CD4-positive, alpha-beta T cell (primary cell): ENCODE measurements at regions of chr2 and their contacts with region 1.

Region 1: GRCh38 chr2:85302121-85302520 is 25.7 kb downstream of the TGOLN2 start:
- DNase-seq: no peak
- ATAC-seq: no peak
- H3K4me3 ChIP-seq: no peak overlapping the region
- H3K4me3 Mint-ChIP-seq: no peak overlapping the region
- H3K27ac ChIP-seq: no peak overlapping the region
- H3K27ac Mint-ChIP-seq: no peak overlapping the region
- H3K4me1 ChIP-seq: peaks cover 16% of the 10 kb centered on the region
- H3K4me1 Mint-ChIP-seq: peaks cover 13% of the 10 kb centered on the region
- H3K27me3 ChIP-seq: no peaks in the 10 kb centered on the region
- H3K27me3 Mint-ChIP-seq: peaks cover 4% of the 10 kb centered on the region
- CTCF ChIP-seq: no peak

Region 2: DNA sequence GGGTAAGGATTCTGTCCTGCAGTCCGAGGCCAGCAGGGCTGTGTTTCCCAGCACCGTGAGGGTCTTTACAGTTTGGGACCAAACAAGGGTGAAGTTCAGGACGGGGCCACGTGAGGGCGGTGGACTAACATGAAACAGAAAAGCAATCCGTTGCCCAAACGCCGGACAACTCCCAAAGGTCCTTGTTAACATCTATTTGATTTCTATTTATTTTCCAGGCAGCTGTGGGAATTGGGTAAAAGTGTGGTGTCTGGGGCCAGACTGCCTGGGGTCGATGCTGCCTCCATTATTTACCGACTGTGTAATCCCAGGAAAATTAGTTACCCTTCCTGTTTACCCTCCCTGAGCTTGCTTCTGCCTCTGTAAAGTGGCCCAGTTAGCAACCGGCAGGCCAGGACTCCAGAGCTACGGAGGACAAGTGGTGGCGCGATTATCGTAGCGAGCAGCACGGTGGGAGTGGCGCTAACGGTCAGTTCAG is 235.2 kb before region 1 on chr2:
- CTCF ChIA-PET with region 1: interaction called, 3 read pairs
- POLR2A ChIA-PET with region 1: no interaction called
- intact Hi-C with region 1: loop called (anchors 2 to 10 kb)
- DNase-seq: peak in 7 of 14 experiments; percentile 2 to 34 (median 22)
- ATAC-seq: no peak
- H3K4me3 ChIP-seq: no peak overlapping the region
- H3K4me3 Mint-ChIP-seq: no peak overlapping the region
- H3K27ac ChIP-seq: no peak overlapping the region
- H3K27ac Mint-ChIP-seq: no peak overlapping the region
- H3K4me1 ChIP-seq: peaks cover 5% of the 10 kb centered on the region
- H3K4me1 Mint-ChIP-seq: peaks cover 6% of the 10 kb centered on the region
- H3K27me3 ChIP-seq: peaks cover 3 to 12% of the 10 kb centered on the region in 2 experiments
- H3K27me3 Mint-ChIP-seq: peaks cover 25% of the 10 kb centered on the region
- CTCF ChIP-seq: no peak

Region 3: DNA sequence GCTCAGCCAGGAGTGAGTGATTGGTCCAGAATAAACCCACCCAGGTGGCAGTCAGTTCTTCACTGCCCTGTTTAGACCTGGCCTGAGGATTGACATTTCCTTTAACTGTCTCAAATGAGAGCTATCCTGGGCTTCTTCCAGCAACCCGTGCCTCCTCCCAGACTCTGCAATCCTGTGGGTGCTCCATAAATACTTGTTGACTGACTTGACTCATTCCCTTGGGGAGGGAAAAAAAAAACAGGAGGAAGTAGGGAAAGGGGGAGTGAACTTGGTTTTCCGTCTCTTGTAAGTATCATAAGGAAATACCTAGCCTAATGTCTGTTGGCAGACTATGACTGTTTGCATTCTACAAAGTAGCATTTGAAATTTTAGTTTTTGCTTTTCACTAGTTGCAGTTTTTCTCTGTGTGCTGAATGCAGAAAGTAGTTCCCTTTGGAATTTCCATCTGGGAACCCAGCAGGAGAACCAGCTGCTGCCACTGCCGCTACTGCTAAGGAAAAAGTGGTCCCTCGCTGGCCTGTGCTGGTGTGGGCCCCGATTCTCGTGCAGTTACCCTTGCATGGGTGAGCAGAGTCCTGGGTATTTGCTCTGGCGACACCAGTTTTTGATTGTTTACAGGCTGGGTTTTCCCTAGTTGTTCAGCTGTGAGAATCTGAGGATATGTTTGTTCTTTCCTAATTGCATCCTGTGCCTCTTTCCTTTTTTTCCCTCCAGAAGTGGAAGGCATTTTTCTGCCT is 53.2 kb before region 1 on chr2:
- CTCF ChIA-PET with region 1: no interaction called
- POLR2A ChIA-PET with region 1: no interaction called
- intact Hi-C with region 1: no loop called
- DNase-seq: no peak
- ATAC-seq: no peak
- H3K4me3 ChIP-seq: no peak overlapping the region
- H3K4me3 Mint-ChIP-seq: no peak overlapping the region
- H3K27ac ChIP-seq: no peak overlapping the region
- H3K27ac Mint-ChIP-seq: no peak overlapping the region
- H3K4me1 ChIP-seq: no peaks in the 10 kb centered on the region
- H3K4me1 Mint-ChIP-seq: no peaks in the 10 kb centered on the region
- H3K27me3 ChIP-seq: no peaks in the 10 kb centered on the region
- H3K27me3 Mint-ChIP-seq: peaks cover 8% of the 10 kb centered on the region
- CTCF ChIP-seq: no peak

Region 4: DNA sequence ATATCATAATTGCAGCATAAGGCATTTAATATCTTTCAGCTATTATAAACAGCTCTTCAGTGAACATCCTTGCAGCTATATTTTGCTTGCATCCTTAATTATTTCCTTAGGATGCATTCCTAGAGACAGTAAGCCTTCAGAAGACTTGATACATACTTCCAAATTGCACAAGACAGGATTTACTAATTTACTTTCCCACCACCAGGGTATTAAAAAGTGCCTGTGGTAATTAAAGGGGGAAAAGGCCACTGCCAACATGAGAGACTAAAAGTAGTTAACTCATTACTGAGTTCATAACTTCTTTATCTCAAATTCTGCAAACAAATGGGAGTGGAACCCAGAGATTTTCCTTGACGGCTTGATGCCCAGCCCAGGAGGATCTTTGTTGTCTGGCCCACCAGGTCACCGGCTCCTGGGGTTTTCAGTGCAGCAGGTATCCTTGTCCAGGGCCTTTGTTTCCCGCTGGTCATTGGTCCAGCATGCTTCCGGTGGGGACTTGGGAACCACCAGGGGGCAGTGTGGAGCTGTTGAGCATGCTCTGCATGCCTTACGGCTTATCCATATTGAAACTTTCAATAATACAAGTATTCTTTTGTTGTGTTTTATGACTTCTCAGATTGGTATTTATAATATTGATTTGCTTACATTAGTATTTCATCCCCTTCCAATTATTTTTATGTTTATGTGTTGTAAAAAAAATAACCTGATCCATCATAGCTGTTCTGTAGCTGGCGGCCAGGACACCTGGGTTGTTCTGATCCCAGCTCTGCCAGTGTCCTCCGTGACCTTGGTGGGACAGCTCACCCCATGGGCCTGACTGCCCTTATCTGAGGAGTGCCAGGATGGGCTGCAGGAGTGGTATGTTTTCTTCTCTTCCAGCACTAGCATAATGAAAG is 35.7 kb before region 1 on chr2:
- CTCF ChIA-PET with region 1: interaction called, 12 read pairs
- POLR2A ChIA-PET with region 1: interaction called, 10 read pairs
- intact Hi-C with region 1: loop called (anchors 1 kb)
- DNase-seq: peak; percentile 47 to 84 (median 66)
- ATAC-seq: peak; percentile 52
- H3K4me3 ChIP-seq: no peak overlapping the region
- H3K4me3 Mint-ChIP-seq: no peak overlapping the region
- H3K27ac ChIP-seq: no peak overlapping the region
- H3K27ac Mint-ChIP-seq: no peak overlapping the region
- H3K4me1 ChIP-seq: no peaks in the 10 kb centered on the region
- H3K4me1 Mint-ChIP-seq: no peaks in the 10 kb centered on the region
- H3K27me3 ChIP-seq: no peaks in the 10 kb centered on the region
- H3K27me3 Mint-ChIP-seq: no peaks in the 10 kb centered on the region
- CTCF ChIP-seq: peak; percentile 99

Region 5: GRCh38 chr2:85369500-85369899 is 67.4 kb after region 1 on chr2:
- CTCF ChIA-PET with region 1: no interaction called
- POLR2A ChIA-PET with region 1: no interaction called
- intact Hi-C with region 1: no loop called
- DNase-seq: no peak
- ATAC-seq: no peak
- H3K4me3 ChIP-seq: no peak overlapping the region
- H3K4me3 Mint-ChIP-seq: no peak overlapping the region
- H3K27ac ChIP-seq: no peak overlapping the region
- H3K27ac Mint-ChIP-seq: no peak overlapping the region
- H3K4me1 ChIP-seq: no peaks in the 10 kb centered on the region
- H3K4me1 Mint-ChIP-seq: no peaks in the 10 kb centered on the region
- H3K27me3 ChIP-seq: no peaks in the 10 kb centered on the region
- H3K27me3 Mint-ChIP-seq: no peaks in the 10 kb centered on the region
- CTCF ChIP-seq: no peak